ENCODE measurements at regions of chr3 and their contacts with region 1.

Region 1: DNA sequence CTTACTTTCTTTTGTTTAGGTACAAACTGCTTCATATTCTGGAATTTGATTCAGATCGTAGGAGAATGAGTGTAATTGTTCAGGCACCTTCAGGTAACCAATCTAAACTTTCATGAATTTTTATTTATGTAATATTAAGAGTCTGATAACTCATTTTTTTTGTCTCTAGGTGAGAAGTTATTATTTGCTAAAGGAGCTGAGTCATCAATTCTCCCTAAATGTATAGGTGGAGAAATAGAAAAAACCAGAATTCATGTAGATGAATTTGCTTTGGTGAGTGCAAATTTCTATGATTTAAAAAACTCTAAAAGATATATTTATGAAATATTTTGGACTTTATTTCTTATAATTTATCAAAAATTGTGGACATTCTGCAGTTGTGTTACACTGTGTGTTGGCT is 75.8 kb downstream of the ATP11B start:
- DNase-seq: no peak
- ATAC-seq: no peak
- H3K4me3 ChIP-seq: no peak overlapping the region
- H3K4me3 Mint-ChIP-seq: no peak overlapping the region
- H3K27ac ChIP-seq: no peak overlapping the region
- H3K27ac Mint-ChIP-seq: no peak overlapping the region
- H3K4me1 ChIP-seq: peaks cover 0 to 2% of the 10 kb centered on the region in 2 experiments
- H3K4me1 Mint-ChIP-seq: no peaks in the 10 kb centered on the region
- H3K27me3 ChIP-seq: no peaks in the 10 kb centered on the region
- H3K27me3 Mint-ChIP-seq: no peaks in the 10 kb centered on the region

Region 2: DNA sequence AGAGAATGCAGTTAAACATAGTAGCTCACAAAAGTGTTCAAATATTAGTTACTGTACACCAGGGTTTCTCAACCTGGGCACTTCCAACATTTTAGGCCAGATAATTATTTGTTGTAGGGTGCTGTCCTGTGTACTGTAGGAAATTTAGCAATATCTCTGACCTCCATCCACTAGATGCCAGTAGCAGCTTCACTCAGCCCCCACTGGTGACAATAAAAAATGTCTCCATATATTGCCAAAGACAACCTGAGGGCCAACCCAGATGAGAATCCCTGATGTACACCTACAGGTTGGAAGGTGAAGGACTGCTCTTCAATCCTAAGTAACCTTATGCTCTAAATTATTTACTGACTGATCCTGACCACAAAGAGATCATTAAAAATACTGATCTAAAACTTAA is 78.8 kb after region 1 on chr3:
- CTCF ChIA-PET with region 1: no interaction called
- POLR2A ChIA-PET with region 1: no interaction called
- DNase-seq: no peak
- ATAC-seq: no peak
- H3K4me3 ChIP-seq: no peak overlapping the region
- H3K4me3 Mint-ChIP-seq: no peak overlapping the region
- H3K27ac ChIP-seq: no peak overlapping the region
- H3K27ac Mint-ChIP-seq: no peak overlapping the region
- H3K4me1 ChIP-seq: no peaks in the 10 kb centered on the region
- H3K4me1 Mint-ChIP-seq: no peaks in the 10 kb centered on the region
- H3K27me3 ChIP-seq: no peaks in the 10 kb centered on the region
- H3K27me3 Mint-ChIP-seq: no peaks in the 10 kb centered on the region

Region 3: DNA sequence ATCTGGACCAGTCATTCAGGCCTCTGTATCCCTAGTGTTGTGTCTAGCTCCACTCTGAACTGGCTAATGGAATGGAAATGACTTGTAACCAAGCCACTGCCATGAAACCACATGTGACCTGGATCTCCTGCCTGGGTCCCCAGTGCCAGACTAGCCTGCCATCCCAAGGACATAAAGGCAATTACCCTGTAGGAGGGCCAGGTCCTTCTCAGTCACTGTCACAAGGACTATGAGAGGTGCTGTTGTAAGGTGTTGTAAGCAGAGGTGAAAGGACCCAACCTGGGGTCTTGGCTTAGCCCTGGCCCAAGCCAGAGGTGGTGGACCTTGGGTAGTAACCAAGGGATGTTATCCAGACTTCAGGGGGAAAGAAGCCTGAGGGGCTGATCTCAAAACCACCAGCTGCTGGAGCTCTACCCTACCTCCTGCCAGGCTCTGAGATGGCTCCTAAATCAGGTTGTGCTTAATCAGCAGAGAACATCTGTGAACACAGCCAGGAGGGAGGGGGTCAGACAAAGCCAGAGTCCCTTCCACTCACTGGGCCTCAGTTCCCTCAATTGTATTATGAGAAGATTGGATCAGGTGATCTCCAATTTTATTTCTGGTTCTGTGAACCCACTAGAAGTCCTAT is 750.7 kb after region 1 on chr3:
- CTCF ChIA-PET with region 1: no interaction called
- POLR2A ChIA-PET with region 1: interaction called in 1 of 2 experiments, 14 read pairs
- DNase-seq: no peak
- ATAC-seq: no peak
- H3K4me3 ChIP-seq: no peak overlapping the region
- H3K4me3 Mint-ChIP-seq: no peak overlapping the region
- H3K27ac ChIP-seq: no peak overlapping the region
- H3K27ac Mint-ChIP-seq: no peak overlapping the region
- H3K4me1 ChIP-seq: no peaks in the 10 kb centered on the region
- H3K4me1 Mint-ChIP-seq: no peaks in the 10 kb centered on the region
- H3K27me3 ChIP-seq: no peaks in the 10 kb centered on the region
- H3K27me3 Mint-ChIP-seq: peaks cover 0 to 4% of the 10 kb centered on the region in 2 donors